Left ventricle myocardium superior (tissue), 1 donor: ENCODE measurements at regions of chr17 and their contacts with region 1.

Region 1: GRCh38 chr17:7989781-7990655 is 12.4 kb upstream of the GUCY2D start:
- DNase-seq: peak; percentile 91
- ATAC-seq: peak; percentile 91

Region 2: GRCh38 chr17:8057691-8058114 is 67.7 kb after region 1 on chr17:
- intact Hi-C with region 1: loop called (anchors 10 kb)
- DNase-seq: no peak
- ATAC-seq: peak; percentile 84